ENCODE measurements at regions of chr1 and their contacts with region 1.

Region 1: DNA sequence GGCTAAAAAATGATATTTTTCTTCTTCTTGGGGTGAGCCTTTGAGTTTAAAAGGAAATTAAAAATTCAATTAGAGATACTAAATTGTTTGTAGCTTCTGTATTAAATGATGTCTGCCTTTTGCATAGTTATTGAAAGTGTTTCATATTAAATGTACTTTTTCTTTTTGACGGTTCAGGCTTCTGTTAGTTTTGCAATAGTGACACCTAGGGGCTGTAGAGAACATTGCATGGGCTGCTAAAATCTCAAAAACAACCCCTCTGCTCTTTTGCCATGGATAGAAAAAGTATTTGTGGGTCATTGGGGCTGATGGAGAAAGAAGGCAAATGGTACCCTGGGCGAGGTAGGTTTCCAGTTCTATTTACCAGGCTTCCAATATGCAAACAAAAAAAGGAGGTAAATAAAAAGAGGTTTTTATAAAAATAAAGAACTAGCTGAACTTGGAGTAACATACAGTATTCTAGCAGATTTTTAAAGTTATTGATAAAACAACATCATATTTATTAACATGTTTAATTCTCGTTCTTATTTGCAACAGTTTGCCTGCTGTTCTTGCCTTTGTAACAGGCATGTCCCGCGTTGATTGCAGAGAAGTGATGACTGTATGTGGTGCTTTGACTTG is 115.4 kb upstream of the HOOK1 start:
- DNase-seq: peak in 1 of 2 donors; percentile 74
- ATAC-seq: peak; percentile 68 to 78 (median 76)
- H3K4me3 ChIP-seq: no peak overlapping the region
- H3K4me3 Mint-ChIP-seq: peak overlapping the region; percentile 43
- H3K27ac ChIP-seq: no peak overlapping the region
- H3K27ac Mint-ChIP-seq: no peak overlapping the region
- H3K4me1 ChIP-seq: peaks cover 5% of the 10 kb centered on the region
- H3K4me1 Mint-ChIP-seq: peaks cover 20 to 23% of the 10 kb centered on the region in 2 donors
- H3K27me3 ChIP-seq: no peaks in the 10 kb centered on the region
- H3K27me3 Mint-ChIP-seq: no peaks in the 10 kb centered on the region
- CTCF ChIP-seq: peak; percentile 100

Region 2: GRCh38 chr1:58515794-58516401 is 1183.4 kb before region 1 on chr1:
- intact Hi-C with region 1: loop called (anchors 5 kb)
- DNase-seq: peak in 1 of 2 donors; percentile 84
- ATAC-seq: peak; percentile 61 to 73 (median 70)
- H3K4me3 ChIP-seq: no peak overlapping the region
- H3K4me3 Mint-ChIP-seq: no peak overlapping the region
- H3K27ac ChIP-seq: no peak overlapping the region
- H3K27ac Mint-ChIP-seq: peak overlapping the region in 1 of 2 donors; percentile 79
- H3K4me1 ChIP-seq: no peaks in the 10 kb centered on the region
- H3K4me1 Mint-ChIP-seq: peaks cover 0 to 7% of the 10 kb centered on the region in 2 donors
- H3K27me3 ChIP-seq: no peaks in the 10 kb centered on the region
- H3K27me3 Mint-ChIP-seq: no peaks in the 10 kb centered on the region
- CTCF ChIP-seq: peak; percentile 83

Region 3: GRCh38 chr1:59220356-59220755 is 479.0 kb before region 1 on chr1:
- intact Hi-C with region 1: no loop called
- DNase-seq: no peak
- ATAC-seq: no peak
- H3K4me3 ChIP-seq: no peak overlapping the region
- H3K4me3 Mint-ChIP-seq: no peak overlapping the region
- H3K27ac ChIP-seq: no peak overlapping the region
- H3K27ac Mint-ChIP-seq: no peak overlapping the region
- H3K4me1 ChIP-seq: no peaks in the 10 kb centered on the region
- H3K4me1 Mint-ChIP-seq: no peaks in the 10 kb centered on the region
- H3K27me3 ChIP-seq: no peaks in the 10 kb centered on the region
- H3K27me3 Mint-ChIP-seq: no peaks in the 10 kb centered on the region
- CTCF ChIP-seq: no peak